ENCODE measurements at regions of chr16 and their contacts with region 1.

Region 1: DNA sequence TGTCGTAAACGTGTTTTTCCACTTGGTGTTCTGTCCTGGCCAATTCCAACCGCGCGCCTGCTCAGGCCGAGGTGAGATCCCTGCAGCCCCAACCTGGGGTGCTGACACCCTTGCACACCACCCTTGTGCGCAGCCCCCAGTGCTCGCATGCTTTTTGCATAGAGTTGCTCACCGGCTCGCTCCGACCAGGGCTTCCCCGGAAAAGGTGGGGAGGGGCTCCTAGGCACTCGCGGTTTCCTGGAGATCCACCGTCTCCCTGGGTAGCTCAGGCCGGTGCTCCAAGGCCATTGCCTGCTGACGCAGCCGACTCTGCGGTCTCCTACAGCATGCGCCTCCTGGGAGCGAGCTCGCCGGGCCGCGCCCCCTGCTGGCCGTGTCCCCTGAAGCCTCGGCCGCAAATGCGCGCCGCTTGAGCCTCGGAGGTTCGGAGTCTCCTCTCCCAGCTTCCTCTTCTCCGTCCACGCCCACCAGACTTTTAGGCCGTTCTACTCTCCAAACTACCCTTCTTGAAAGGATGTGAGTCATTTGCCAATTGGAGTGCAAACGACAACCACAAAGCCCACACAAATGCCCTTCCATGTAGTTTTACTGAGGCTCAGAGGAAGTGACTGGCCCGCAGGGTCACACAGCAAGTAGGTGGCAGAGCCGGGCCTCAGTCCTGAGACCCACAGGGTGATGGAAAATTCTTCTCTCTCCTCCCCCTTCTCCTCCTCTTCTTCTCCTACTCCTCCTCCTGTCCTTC is 7.2 kb upstream of the PDP2 start:
- DNase-seq: peak; percentile 95
- H3K4me3 ChIP-seq: peak overlapping the region; percentile 51
- CTCF ChIP-seq: peak; percentile 99

Region 2: DNA sequence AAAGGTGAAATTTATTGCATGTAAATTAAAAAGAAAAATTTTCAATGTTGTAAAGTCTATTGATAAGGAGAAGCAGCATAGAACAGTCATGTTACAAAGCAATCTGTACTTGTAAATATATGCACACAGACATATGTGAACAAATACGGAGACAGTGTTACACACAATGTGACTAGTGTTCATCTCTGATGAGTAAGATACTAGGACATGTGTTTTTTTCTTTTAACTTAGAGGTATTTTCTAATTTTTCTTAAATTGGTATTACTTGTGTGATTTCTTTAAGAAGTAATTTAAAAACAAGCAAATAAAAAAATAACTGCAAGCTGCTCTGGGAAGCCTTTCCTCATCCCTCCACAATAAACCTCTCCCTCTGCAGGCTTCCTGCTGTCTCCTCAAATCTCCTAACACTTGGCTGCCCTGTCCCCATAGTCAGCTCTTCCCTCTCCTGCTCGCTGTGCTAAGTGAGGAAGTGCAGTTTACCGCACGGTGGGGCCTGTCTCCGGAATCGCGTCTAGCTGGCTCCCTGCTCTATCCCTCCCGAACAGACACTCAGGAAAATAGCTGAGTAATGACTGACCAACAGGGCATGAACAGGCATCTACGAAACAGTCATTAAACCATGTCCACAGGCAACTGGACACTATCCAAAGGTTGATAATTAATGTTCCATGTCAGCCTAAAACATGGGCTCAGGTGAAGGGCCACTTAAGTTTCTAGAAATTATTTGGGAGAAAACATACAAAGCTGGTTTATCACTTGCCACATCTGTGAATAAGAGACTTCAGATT is 212.5 kb before region 1 on chr16:
- CTCF ChIA-PET with region 1: interaction called, 46 read pairs
- POLR2A ChIA-PET with region 1: no interaction called
- DNase-seq: no peak
- H3K4me3 ChIP-seq: no peak overlapping the region
- CTCF ChIP-seq: peak; percentile 53

Region 3: GRCh38 chr16:66740010-66740409 is 133.1 kb before region 1 on chr16:
- CTCF ChIA-PET with region 1: interaction called, 13 read pairs
- POLR2A ChIA-PET with region 1: no interaction called
- DNase-seq: no peak
- H3K4me3 ChIP-seq: no peak overlapping the region
- CTCF ChIP-seq: peak; percentile 44

Region 4: GRCh38 chr16:66790130-66790733 is 82.9 kb before region 1 on chr16:
- CTCF ChIA-PET with region 1: no interaction called
- POLR2A ChIA-PET with region 1: no interaction called
- DNase-seq: no peak
- H3K4me3 ChIP-seq: no peak overlapping the region
- CTCF ChIP-seq: no peak

Region 5: DNA sequence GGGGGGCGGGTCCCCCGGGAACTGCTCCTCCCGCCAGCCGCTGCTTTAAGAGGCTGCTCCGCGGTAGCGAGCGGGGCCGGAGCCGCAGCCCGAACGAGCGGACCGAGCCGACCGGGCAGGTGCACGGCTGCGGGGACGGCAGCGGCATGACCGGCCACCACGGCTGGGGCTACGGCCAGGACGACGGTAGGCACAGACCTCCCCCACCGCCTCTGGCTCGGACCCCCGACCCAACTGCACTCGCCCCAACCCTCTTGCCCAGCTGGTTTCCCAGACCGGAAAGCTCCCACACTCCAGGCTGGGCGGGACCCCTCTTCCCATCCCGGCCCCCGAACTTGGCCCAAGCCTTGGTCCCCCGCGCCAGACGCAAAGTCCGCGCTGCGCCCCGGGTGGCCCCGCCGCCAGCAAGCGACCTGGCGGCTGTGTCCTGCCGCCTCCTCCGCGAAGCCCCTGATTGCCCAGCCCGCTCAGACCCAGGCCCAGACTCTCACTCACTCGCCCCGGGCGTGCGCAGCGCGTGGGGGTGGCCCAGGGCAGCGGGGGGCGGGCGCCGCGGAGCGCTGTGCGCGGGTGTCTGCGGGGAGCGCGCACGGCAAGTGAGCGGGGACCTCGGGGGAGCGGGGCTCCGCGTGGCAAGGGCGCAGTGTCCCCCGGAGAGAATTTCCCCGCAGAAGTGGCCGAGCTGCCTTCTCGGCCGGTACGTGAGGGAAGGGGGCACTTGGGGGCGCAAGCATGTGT is 28.6 kb before region 1 on chr16 and contains the start of gene CA7:
- CTCF ChIA-PET with region 1: interaction called, 110 read pairs
- POLR2A ChIA-PET with region 1: no interaction called
- DNase-seq: no peak
- H3K4me3 ChIP-seq: peak within 1 kb of the TSS; percentile 36
- CTCF ChIP-seq: no peak

Region 6: DNA sequence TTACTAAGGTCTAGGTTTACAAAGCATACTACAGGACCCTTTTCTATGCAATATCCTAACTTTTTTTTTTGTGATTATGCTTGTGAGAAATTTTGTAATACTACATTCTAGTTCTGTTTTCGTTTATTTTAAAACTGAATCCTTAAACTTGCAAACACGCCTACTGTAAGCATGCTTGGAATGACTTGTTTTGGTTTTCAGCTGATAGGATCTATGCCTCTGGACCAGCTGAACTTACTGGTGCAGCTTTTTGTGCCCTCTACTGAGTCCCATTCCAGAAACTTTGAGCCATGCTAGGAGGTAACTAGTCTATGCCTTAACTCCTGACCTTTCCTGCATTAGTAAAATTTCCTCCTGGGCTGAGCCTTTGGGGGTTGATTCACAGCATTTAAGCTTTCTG is 13.2 kb after region 1 on chr16:
- CTCF ChIA-PET with region 1: interaction called, 34 read pairs
- POLR2A ChIA-PET with region 1: interaction called, 4 read pairs
- DNase-seq: no peak
- H3K4me3 ChIP-seq: no peak overlapping the region
- CTCF ChIP-seq: no peak

Region 7: GRCh38 chr16:67091906-67092566 is 218.9 kb after region 1 on chr16:
- CTCF ChIA-PET with region 1: no interaction called
- POLR2A ChIA-PET with region 1: no interaction called
- DNase-seq: peak; percentile 82
- H3K4me3 ChIP-seq: no peak overlapping the region
- CTCF ChIP-seq: no peak